ENCODE measurements at regions of chr11 and their contacts with region 1.

Region 1: DNA sequence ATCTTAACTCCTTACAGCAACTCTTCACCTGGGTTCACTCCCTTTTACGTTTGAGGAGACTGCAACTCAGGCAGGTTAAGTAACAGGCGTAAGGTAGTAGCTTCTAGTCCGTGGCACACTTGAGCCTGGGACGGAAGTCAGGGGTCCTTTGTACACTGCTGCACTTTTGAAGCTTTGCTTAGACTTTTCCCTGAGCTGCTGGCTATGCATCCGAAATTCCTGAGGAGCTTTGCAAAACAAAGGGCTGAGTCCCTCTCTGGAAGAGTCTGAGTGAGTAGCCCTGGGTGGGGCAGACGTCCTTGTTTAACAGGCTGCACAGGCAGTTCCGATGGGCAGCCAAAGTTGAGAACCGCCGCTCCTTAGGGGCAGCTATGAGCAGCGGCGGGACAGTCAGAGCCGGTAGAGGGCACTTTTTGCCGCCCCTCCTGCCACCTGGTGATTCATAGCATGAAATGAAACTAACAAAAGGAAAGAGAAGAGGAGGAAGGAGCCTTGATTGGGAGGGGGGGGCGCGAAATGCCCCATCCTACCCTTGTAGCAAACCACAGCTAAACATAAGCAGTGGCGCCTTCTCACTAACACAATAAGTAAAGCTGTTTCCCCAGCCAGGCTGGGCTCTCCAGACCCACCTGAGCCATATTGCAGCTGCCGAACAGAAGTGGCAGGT is 1.4 kb downstream of the TMEM109 start:
- DNase-seq: peak; percentile 77
- ATAC-seq: peak; percentile 32

Region 2: DNA sequence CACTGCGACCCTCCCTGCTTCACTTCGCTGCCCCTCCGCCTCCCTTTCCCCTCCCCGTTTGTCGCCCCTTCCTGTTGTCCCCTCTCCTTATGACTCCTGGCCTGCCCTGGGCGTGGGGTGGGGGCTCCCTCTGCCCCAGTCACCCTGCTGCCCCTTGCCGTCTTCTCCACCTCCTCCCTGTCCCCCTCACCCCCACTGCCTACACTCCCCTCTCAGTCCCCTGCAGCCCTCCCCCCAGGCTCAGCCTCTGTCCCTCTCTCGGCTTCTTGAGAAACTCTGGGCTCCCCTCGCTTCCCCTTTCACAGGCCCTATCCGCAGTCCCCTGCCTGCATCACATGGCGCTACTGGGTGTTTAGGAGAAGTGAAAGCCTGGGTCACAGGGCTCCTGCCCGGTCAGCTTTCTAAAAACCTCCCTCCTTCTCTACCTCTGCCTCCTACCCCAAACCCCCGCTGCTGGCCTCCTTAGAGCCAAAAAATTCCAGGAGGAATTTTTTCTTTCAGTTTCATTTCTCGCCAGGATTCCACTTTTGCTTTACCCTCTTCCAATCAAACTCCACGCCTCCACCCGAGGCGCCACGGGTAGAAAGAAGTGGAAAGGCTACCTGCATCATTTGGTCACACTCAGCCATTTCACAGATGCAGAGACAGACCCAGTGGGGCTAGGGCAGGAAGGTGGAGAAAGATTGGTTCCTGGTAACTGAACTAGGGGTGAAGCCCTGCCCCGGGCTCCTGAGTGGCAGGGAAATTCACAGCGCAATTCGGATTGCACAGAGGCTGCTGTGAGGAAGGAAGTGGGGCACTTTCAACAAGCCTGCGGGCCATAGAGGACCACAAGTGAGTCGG is 36.7 kb after region 1 on chr11 and contains the start of gene SLC15A3:
- intact Hi-C with region 1: loop called (anchors 5 kb)
- DNase-seq: peak; percentile 94
- ATAC-seq: peak; percentile 82
- total RNA-seq, gene SLC15A3: 20.8 TPM

Region 3: GRCh38 chr11:60985991-60986915 is 70.9 kb after region 1 on chr11:
- intact Hi-C with region 1: no loop called
- DNase-seq: no peak
- ATAC-seq: no peak

Measured in Right ventricle myocardium inferior (tissue), 1 donor.